Activated T-helper 1 cell treated with anti-CD3 and anti-CD28 coated beads, Interleukin-12 subunit alpha, Interleukin-12 subunit beta, Interleukin-2, Interleukin-4 antibody, amounts not matched to agents 30 ng/mL and 10 ng/mL and 1 ng/mL, durations not matched to agents 14 hours and 24 hours and 36 hours (primary cell): ENCODE measurements at regions of chr21 and their contacts with region 1.

Region 1: DNA sequence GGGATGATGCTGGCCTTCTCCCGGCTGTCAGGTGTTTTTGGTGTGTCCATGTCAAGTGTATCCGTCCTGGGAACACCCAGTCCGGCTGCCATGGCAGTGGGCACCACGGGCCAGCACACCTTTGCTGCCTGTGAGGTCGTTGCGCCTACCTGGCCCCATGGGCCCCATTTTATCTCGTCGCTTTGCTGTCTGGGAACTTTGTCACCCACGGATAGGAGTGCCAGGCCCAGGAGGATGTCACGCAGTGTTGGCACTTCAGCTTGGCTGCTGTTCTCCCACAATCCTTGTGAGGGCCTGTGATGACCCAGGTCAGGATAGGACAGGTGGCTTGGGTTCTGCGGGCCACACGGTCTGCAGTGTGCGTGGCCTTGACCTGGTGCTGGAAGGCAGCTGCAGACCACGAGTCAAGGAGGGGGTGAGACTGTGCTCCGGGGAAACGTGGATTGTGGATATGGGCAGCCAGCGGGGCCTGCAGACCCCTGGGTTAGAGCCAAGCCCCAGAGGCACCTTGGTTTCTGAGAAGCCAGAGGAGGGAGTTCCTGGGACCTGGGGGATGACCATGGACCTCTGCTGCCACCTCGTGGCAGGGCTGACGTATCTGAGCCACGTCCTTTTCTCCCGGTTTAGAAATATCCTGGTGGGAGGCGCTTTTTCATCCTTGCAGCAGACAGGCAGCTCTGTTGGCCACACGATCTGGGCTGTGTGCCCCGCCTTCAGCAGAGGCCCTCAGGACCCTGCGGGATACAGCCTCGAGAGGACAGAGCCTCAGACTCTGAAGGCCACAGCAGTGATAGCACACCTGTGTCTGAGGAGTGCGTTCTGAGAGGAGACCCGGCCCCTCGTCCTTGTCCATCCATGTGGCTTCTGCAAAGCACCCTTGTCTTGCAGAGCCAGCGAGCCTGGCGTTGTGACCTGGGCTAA is 161.1 kb upstream of the COL6A1 start:
- DNase-seq: peak; percentile 71
- H3K4me3 Mint-ChIP-seq: peak overlapping the region; percentile 39
- H3K27ac Mint-ChIP-seq: peak overlapping the region; percentile 13
- H3K4me1 Mint-ChIP-seq: peaks cover 51% of the 10 kb centered on the region
- H3K27me3 Mint-ChIP-seq: peaks cover 2% of the 10 kb centered on the region

Region 2: GRCh38 chr21:45074048-45074817 is 746.2 kb before region 1 on chr21 and contains the start of gene ADARB1:
- intact Hi-C with region 1: loop called (anchors 1 kb)
- DNase-seq: peak; percentile 63
- H3K4me3 Mint-ChIP-seq: peak within 1 kb of the TSS; percentile 96
- H3K27ac Mint-ChIP-seq: peak within 1 kb of the TSS; percentile 98
- H3K4me1 Mint-ChIP-seq: peaks cover 42% of the 10 kb centered on the region
- H3K27me3 Mint-ChIP-seq: no peaks in the 10 kb centered on the region
- total RNA-seq, gene ADARB1: 24.8 and 25.9 TPM in 2 replicates

Region 3: DNA sequence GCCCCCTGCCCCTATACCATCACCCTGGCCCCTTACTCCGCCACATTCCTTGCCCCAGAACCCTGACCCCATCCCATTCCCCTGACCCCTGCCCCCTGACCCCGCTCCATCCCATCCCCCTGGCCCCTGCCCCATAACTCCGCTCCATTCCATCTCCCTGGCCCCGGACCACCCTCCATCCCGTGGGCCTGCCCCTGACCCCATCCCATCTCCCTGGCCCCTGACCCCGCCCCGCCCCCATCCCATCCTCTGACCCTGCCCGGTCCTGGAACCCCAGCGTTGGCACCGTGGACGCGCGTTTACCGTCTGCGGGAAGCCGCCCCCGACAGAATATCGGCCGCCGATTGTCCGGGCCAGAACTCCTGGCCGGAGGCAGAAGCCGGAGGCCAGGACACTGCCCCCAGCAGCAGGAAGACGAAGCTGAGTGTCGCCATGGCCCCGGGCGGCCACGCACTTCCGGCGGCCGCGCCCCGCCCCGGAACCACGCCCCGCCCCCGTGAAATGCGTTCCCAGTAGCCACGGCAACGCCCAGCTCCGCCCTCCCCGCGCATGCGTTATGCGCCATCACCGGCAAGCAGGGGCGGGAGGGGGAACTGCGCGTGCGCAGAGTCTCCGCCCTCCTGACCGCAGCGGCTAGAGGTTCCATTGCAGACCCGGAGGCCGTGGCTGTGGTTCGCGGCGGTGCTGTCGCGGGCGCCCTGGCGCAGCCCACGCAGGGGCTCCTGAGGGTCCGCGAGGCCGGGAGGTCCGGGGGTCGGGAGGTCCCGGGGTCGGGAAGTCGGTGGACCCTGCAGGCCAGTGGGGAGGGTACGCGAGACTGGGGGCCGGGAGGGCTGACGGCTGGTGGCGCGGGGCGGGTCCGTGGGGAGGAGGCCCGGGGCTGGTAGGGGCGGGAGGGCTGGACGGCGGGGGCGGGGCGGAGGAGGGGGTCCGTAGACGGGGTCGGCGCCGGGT is 532.7 kb before region 1 on chr21 and contains the start of gene POFUT2:
- intact Hi-C with region 1: loop called (anchors 1 kb)
- DNase-seq: peak; percentile 97
- H3K4me3 Mint-ChIP-seq: peak within 1 kb of the TSS; percentile 84
- H3K27ac Mint-ChIP-seq: peak within 1 kb of the TSS; percentile 86
- H3K4me1 Mint-ChIP-seq: peaks cover 16% of the 10 kb centered on the region
- H3K27me3 Mint-ChIP-seq: peaks cover 12% of the 10 kb centered on the region
- total RNA-seq, gene POFUT2: 14.3 and 17.6 TPM in 2 replicates

Region 4: DNA sequence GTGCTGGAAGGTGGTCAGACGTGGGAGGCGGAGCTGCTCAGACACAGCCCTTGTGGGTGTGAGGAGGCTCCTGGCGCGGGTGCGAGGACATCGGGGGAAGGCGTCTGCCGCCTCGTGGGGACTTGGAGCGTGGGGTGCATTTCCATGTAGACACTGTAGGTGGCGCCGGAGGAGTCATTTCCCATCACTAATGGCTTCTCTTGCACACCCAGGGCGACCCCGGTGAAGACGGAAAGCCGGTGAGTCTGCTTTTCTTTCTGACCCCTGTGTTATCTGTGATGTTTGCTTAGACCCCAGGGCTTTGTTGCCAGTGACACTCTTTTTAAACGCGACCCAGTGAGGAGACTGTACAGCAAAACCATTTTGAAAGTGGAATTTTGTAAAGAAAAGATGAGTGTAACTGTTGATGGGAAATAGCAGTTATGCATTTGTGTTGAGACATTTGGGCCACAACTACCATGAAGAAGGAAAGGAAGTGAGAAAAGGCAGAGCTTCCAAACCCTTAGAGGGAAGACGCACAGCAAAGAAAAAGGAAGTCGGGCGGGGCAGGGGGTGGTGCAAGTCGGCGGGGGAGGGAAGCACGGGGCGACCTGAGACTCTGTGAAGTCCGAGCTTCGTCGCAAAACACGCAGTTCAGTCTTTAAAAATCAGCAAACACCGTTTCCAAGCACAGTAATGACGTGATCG is 342.2 kb before region 1 on chr21:
- intact Hi-C with region 1: loop called (anchors 1 kb)
- DNase-seq: peak; percentile 68
- H3K4me3 Mint-ChIP-seq: peak overlapping the region; percentile 92
- H3K27ac Mint-ChIP-seq: peak overlapping the region; percentile 99
- H3K4me1 Mint-ChIP-seq: peaks cover 32% of the 10 kb centered on the region
- H3K27me3 Mint-ChIP-seq: no peaks in the 10 kb centered on the region

Region 5: DNA sequence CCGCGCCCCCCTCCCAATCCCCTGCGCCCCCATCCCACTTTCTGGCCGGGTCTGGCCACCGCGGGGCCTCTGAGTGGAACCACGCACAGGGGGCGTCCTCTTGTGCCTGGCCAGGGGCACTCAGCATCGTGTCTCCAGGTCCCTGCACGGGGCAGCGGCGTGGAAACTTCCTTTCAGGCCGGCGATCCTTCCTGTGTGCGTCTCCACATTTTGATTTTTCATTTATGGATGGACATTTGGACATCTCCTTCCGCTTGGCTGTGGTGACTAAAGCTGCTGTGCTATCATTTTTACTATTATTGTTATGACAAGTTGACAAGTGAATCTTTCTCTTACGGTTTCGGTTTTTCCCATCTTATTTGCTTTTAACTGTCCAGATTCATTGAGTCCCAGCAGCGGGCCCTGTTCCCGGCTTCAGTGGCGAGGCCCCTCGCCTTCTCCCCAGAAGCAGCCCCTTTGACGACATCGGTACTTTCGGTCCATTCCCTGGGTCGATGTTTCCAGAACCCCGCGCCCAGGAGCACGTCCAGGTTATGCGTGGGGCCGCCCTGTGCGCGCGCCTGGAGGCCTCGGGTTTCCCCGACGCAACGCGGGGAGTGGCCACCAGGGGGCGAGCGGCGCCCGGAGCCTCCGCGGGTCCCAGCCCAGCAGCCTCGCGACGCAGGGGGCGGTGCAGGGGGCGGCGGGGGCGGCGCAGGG is 265.8 kb before region 1 on chr21:
- intact Hi-C with region 1: loop called (anchors 1 kb)
- DNase-seq: peak; percentile 88
- H3K4me3 Mint-ChIP-seq: peak overlapping the region; percentile 91
- H3K27ac Mint-ChIP-seq: peak overlapping the region; percentile 93
- H3K4me1 Mint-ChIP-seq: peaks cover 22% of the 10 kb centered on the region
- H3K27me3 Mint-ChIP-seq: peaks cover 3% of the 10 kb centered on the region

Region 6: GRCh38 chr21:45596704-45597318 is 223.6 kb before region 1 on chr21:
- intact Hi-C with region 1: loop called (anchors 1 kb)
- DNase-seq: peak; percentile 73
- H3K4me3 Mint-ChIP-seq: no peak overlapping the region
- H3K27ac Mint-ChIP-seq: peak overlapping the region; percentile 4
- H3K4me1 Mint-ChIP-seq: peaks cover 9% of the 10 kb centered on the region
- H3K27me3 Mint-ChIP-seq: peaks cover 2% of the 10 kb centered on the region

Region 7: GRCh38 chr21:45768751-45769070 is 51.7 kb before region 1 on chr21:
- intact Hi-C with region 1: loop called (anchors 1 kb)
- DNase-seq: no peak
- H3K4me3 Mint-ChIP-seq: peak overlapping the region; percentile 25
- H3K27ac Mint-ChIP-seq: peak overlapping the region; percentile 95
- H3K4me1 Mint-ChIP-seq: peaks cover 36% of the 10 kb centered on the region
- H3K27me3 Mint-ChIP-seq: no peaks in the 10 kb centered on the region